ENCODE measurements at regions of chr4 and their contacts with region 1.

Region 1: DNA sequence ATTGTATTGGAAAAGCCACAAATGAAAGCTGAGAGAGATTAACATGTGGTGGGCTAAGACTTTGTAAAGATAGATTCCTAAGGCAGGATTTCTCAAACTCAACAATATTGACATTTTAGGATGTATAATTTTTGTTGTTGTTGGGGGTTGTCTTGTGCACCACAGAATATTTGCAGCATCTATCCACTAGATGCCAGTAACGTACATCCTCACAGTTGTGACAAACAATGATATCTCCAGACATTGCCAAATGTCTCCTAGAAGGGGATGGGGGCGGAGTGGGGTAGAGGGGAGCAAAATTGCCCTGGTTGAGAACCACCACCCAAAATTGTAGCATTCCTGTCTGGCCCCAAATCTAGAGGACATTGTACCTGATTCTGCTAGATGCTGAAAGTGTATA is 14.7 kb upstream of the CBR4 start:
- DNase-seq: peak; percentile 35
- H3K4me3 ChIP-seq: no peak overlapping the region
- H3K27ac ChIP-seq: no peak overlapping the region
- H3K27me3 ChIP-seq: no peaks in the 10 kb centered on the region
- CTCF ChIP-seq: peak; percentile 70

Region 2: GRCh38 chr4:168769416-168769815 is 255.3 kb before region 1 on chr4:
- in situ Hi-C with region 1: no loop called
- DNase-seq: peak; percentile 85
- H3K4me3 ChIP-seq: no peak overlapping the region
- H3K27ac ChIP-seq: peak overlapping the region; percentile 83
- H3K27me3 ChIP-seq: no peaks in the 10 kb centered on the region
- CTCF ChIP-seq: no peak

Region 3: DNA sequence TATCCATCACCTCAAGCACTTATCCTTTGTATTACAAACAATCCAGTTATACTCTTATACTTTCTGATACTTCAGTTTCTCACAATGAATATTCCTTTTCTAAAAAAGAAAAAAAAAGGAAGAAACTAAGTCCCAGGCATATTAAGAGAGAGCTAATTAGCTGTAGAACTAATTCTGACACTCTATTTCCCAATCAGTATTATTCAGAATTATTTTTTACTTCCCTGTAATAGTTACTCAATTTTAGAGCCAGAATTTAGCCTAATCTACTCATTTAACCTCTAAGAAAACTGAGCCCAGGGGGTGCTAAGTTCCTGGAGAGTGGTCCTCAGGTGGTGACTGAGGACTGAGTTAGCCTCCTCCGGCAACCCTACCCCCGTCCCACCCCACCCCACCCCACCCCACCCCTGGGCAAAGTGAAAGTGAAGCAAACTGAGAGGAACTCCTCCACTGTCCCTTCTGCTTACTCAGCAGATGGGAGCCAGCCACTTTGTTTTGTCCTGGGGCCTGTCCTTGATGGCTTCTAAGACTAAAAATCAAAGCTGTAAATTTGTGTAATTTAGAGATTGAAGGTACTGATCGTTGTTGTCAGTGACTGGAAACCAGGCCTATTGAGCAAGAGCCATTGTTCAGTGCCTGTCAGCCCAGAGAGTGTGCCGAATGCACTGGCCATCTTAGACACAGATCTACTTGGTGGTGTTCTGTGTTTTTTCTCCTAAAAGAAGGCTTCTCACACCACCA is 176.8 kb before region 1 on chr4:
- in situ Hi-C with region 1: no loop called
- DNase-seq: no peak
- H3K4me3 ChIP-seq: no peak overlapping the region
- H3K27ac ChIP-seq: peak overlapping the region; percentile 69
- H3K27me3 ChIP-seq: no peaks in the 10 kb centered on the region
- CTCF ChIP-seq: no peak

Region 4: DNA sequence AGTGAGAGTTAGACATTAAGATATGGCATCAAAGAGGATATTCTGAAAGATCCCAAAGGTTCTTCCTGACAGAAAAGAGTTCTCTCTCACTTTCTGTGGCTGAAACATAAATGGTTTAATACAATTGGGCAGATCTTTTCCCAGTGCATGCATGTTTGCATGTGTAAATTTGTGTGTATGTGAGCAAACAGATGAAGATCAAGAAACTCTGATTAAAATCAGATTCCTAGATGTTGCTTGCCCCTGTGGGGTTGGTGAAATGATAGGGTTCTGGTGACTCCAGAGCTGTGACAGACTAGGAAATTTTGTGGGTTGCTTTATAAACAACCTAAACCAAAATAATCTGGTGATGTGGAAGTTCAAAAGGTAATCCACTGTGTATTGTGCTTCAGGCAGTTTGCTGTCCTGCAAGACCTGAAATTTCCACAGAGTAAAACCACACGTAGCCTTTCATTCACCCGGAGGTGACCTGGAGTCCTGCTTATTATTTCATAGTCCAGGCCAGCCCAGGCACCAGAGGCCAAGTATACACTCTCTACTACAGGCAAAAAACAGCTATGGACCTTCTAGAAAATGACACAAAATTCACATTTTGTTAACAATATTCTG is 99.8 kb after region 1 on chr4:
- in situ Hi-C with region 1: no loop called
- DNase-seq: no peak
- H3K4me3 ChIP-seq: no peak overlapping the region
- H3K27ac ChIP-seq: no peak overlapping the region
- H3K27me3 ChIP-seq: no peaks in the 10 kb centered on the region
- CTCF ChIP-seq: no peak

Region 5: DNA sequence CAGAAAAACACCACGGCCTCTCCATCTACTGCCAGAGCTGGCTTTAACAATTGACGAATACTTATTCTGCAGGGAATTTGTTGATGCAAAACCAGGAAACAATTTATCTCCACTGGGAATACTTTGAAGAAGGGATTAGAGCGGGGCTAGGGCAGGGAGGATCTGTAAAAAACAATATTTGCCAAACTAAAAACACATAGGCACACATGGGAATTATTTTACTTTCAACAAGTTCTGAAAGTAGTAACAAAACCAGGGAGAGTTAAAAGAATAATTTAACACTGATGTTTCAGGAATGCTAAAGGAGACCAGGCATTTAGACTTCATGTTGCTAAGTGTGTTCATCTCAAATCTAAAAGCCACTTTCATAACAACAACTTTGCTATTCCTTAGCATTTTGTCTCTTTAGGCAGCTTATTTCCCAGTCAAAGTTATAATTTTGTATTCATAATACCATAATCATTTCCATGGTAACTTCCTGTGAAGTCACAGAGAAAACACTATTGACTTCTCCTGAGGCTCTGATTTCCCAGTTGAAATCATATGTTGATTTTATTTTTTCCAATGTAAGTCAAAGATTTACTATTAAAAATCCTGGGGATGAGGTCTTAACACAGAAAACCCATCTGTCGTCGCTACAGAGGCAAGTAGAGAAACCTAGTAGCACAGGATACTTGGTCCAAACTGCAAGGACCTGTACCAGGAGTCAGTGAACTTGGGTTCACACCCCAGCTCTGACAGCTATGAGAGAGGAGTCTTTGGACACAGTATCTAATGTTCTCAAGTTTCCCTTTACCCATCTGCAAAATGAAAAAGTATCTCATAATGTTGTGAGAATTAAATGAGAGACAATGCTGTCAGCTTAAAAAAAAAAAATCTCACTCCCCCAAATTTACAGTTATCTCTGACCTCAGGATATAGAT is 176.7 kb after region 1 on chr4:
- in situ Hi-C with region 1: no loop called
- DNase-seq: no peak
- H3K4me3 ChIP-seq: no peak overlapping the region
- H3K27ac ChIP-seq: peak overlapping the region; percentile 85
- H3K27me3 ChIP-seq: no peaks in the 10 kb centered on the region
- CTCF ChIP-seq: no peak

Region 6: GRCh38 chr4:169485791-169486742 is 461.3 kb after region 1 on chr4:
- in situ Hi-C with region 1: loop called (anchors 25 kb)
- DNase-seq: peak; percentile 59
- H3K4me3 ChIP-seq: no peak overlapping the region
- H3K27ac ChIP-seq: no peak overlapping the region
- H3K27me3 ChIP-seq: no peaks in the 10 kb centered on the region
- CTCF ChIP-seq: peak; percentile 56

Measured in brain microvascular endothelial cell (primary cell).